Activated naive CD4-positive, alpha-beta T cell treated with anti-CD3 and anti-CD28 coated beads for 36 hours (primary cell): ENCODE measurements at regions of chr7 and their contacts with region 1.

Region 1: GRCh38 chr7:139645572-139646523 is 122.4 kb downstream of the CLEC2L start:
- DNase-seq: peak; percentile 93
- H3K4me3 Mint-ChIP-seq: no peak overlapping the region
- H3K27ac Mint-ChIP-seq: no peak overlapping the region
- H3K4me1 Mint-ChIP-seq: peaks cover 69% of the 10 kb centered on the region
- H3K27me3 Mint-ChIP-seq: no peaks in the 10 kb centered on the region

Region 2: GRCh38 chr7:139635526-139636302 is 10.1 kb before region 1 on chr7:
- CTCF ChIA-PET with region 1: interaction called, 53 read pairs
- intact Hi-C with region 1: no loop called
- DNase-seq: peak; percentile 85
- H3K4me3 Mint-ChIP-seq: peak overlapping the region; percentile 72
- H3K27ac Mint-ChIP-seq: peak overlapping the region; percentile 77
- H3K4me1 Mint-ChIP-seq: peaks cover 61% of the 10 kb centered on the region
- H3K27me3 Mint-ChIP-seq: no peaks in the 10 kb centered on the region

Region 3: DNA sequence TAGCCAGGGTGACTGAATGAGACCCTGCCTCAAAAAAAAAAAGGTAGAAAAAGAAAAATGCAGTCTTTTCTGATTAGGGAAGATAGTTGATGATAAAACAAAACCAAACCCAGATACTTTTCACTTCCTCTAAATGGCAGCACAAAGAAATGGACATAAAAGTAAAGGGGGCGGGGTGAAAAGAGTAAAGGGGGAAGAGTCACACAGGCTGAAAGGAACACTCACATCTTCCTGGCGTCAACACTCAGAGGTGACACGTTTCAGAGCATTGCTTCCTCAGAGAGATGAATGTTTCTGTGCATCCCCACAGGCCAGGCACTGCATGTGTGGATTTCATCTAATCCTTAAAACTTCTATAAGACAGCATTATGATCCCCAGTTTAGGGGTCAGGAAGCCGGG is 50.7 kb after region 1 on chr7:
- CTCF ChIA-PET with region 1: interaction called, 5 read pairs
- intact Hi-C with region 1: loop called (anchors 1 kb)
- DNase-seq: peak; percentile 78
- H3K4me3 Mint-ChIP-seq: no peak overlapping the region
- H3K27ac Mint-ChIP-seq: peak overlapping the region; percentile 81
- H3K4me1 Mint-ChIP-seq: peaks cover 30% of the 10 kb centered on the region
- H3K27me3 Mint-ChIP-seq: no peaks in the 10 kb centered on the region

Region 4: GRCh38 chr7:139777948-139778841 is 132.3 kb after region 1 on chr7 and contains the start of gene HIPK2:
- CTCF ChIA-PET with region 1: interaction called, 17 read pairs
- intact Hi-C with region 1: loop called (anchors 1 kb)
- DNase-seq: peak; percentile 68
- H3K4me3 Mint-ChIP-seq: peak within 1 kb of the TSS; percentile 96
- H3K27ac Mint-ChIP-seq: peak within 1 kb of the TSS; percentile 84
- H3K4me1 Mint-ChIP-seq: peaks cover 36% of the 10 kb centered on the region
- H3K27me3 Mint-ChIP-seq: peaks cover 14% of the 10 kb centered on the region
- total RNA-seq, gene HIPK2: 16.8 to 17.3 TPM

Region 5: DNA sequence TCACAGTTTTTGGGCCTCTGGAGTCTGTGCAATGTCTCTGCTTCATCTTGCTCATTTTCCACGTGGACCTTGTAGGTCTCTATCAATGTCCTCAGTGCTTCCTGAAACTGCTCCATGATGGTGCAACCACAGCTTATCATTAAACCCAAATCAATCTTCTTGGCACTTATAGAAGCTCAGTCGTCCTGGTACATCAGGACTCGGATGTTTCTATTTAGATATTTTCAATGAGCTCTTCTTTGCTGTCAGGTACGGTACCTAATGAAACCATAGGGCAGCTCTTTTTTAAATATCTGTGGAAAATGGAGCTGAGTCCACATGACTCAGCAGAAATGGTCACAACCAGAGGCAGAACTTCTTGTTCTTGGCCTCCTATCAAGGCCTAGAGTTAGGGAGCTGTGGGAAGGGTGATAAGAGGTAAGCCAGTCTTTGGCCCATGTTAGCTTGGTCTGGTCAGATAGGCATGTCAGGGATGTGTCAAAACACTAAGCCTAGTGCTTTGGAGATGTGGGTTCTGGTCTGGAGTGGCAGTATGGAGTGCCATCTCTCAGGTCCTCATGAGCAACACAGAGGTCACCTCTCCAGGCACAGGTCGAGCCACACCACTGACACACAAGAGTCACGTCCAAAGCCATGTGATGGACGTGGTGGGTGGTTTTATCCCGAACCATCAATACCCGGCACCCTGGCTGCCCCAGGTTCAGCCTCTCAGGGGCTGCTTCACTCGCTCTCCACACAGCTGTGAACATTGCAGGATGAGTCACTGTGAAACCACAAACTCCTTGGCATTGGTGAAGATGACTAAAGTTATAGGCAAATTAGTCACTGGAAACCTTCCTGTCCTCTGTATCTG is 270.2 kb after region 1 on chr7:
- CTCF ChIA-PET with region 1: interaction called, 7 read pairs
- intact Hi-C with region 1: loop called (anchors 1 kb)
- DNase-seq: peak; percentile 87
- H3K4me3 Mint-ChIP-seq: no peak overlapping the region
- H3K27ac Mint-ChIP-seq: peak overlapping the region; percentile 19
- H3K4me1 Mint-ChIP-seq: peaks cover 24% of the 10 kb centered on the region
- H3K27me3 Mint-ChIP-seq: peaks cover 2% of the 10 kb centered on the region

Region 6: DNA sequence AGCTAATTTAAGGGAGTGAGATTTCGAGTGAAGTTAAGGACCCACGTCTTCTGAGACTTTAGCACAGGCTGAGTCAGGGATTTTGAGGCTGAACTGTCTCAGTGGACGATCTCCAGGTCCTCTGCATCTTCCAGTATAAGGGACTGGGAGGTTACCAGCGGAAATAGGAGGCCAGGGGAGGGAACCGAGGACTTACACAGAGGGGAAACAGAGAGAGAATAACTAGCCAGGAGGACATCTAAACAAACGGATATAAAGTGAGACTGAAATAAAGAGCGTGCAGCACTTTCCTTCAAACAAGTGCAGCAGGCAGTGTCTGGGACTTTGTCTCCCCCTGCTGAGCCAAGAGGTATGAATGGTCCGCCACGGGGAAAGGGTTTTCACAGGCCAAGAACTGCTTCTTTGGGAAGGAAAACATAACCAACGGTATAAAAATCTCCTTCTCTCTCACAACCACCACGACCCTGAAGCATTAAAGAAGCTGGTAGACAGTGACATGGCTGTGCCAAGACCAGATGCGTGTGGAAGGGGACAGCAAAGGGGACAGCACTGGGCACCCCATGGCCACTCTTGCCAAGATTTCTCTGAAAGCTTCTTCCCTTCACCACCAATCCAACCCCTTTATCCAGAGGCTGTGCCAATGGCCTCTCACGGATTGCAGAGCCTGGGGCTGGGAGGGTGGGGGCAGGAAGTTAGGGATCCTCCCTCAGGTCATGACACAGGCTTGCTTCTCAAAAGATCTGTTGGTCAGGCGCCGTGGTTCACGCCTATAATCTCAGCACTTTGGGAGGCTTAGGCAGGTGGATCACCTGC is 680.5 kb after region 1 on chr7:
- CTCF ChIA-PET with region 1: no interaction called
- intact Hi-C with region 1: loop called (anchors 2 kb)
- DNase-seq: peak; percentile 76
- H3K4me3 Mint-ChIP-seq: no peak overlapping the region
- H3K27ac Mint-ChIP-seq: no peak overlapping the region
- H3K4me1 Mint-ChIP-seq: no peaks in the 10 kb centered on the region
- H3K27me3 Mint-ChIP-seq: no peaks in the 10 kb centered on the region